ENCODE measurements at regions of chr16 and their contacts with region 1.

Region 1: GRCh38 chr16:30429678-30430427 is at the start of gene DCTPP1:
- DNase-seq: peak; percentile 89 to 100 (median 95)
- ATAC-seq: peak; percentile 96
- H3K4me3 ChIP-seq: peak within 1 kb of the TSS; percentile 62 to 71
- H3K4me3 Mint-ChIP-seq: no peak within 1 kb of the TSS
- H3K27ac ChIP-seq: peak within 1 kb of the TSS; percentile 60 to 72
- H3K27ac Mint-ChIP-seq: no peak within 1 kb of the TSS
- H3K4me1 ChIP-seq: peaks cover 18% of the 10 kb centered on the region
- H3K4me1 Mint-ChIP-seq: peaks cover 19% of the 10 kb centered on the region
- H3K27me3 ChIP-seq: no peaks in the 10 kb centered on the region
- H3K27me3 Mint-ChIP-seq: no peaks in the 10 kb centered on the region
- CTCF ChIP-seq: peak; percentile 63
- total RNA-seq, gene DCTPP1: 4.0 to 5.5 TPM

Region 2: GRCh38 chr16:30354423-30355143 is 75.3 kb before region 1 on chr16:
- CTCF ChIA-PET with region 1: no interaction called
- POLR2A ChIA-PET with region 1: no interaction called
- intact Hi-C with region 1: no loop called
- DNase-seq: no peak
- ATAC-seq: peak; percentile 34
- H3K4me3 ChIP-seq: peak overlapping the region; percentile 70 to 98
- H3K4me3 Mint-ChIP-seq: peak overlapping the region; percentile 94
- H3K27ac ChIP-seq: peak overlapping the region; percentile 63 to 98
- H3K27ac Mint-ChIP-seq: peak overlapping the region; percentile 98
- H3K4me1 ChIP-seq: peaks cover 32% of the 10 kb centered on the region
- H3K4me1 Mint-ChIP-seq: peaks cover 29% of the 10 kb centered on the region
- H3K27me3 ChIP-seq: no peaks in the 10 kb centered on the region
- H3K27me3 Mint-ChIP-seq: no peaks in the 10 kb centered on the region
- CTCF ChIP-seq: no peak

Region 3: GRCh38 chr16:30370444-30371247 is 59.2 kb before region 1 on chr16 and contains the start of gene TBC1D10B:
- CTCF ChIA-PET with region 1: no interaction called
- POLR2A ChIA-PET with region 1: interaction called, 3 read pairs
- intact Hi-C with region 1: loop called (anchors 1 kb)
- DNase-seq: peak; percentile 98 to 100 (median 99)
- ATAC-seq: peak; percentile 84
- H3K4me3 ChIP-seq: peak within 1 kb of the TSS; percentile 79 to 83
- H3K4me3 Mint-ChIP-seq: peak within 1 kb of the TSS; percentile 89
- H3K27ac ChIP-seq: peak within 1 kb of the TSS; percentile 36 to 84
- H3K27ac Mint-ChIP-seq: peak within 1 kb of the TSS; percentile 87
- H3K4me1 ChIP-seq: peaks cover 42% of the 10 kb centered on the region
- H3K4me1 Mint-ChIP-seq: peaks cover 54% of the 10 kb centered on the region
- H3K27me3 ChIP-seq: no peaks in the 10 kb centered on the region
- H3K27me3 Mint-ChIP-seq: no peaks in the 10 kb centered on the region
- CTCF ChIP-seq: no peak
- total RNA-seq, gene TBC1D10B: 12.3 to 13.8 TPM

Region 4: DNA sequence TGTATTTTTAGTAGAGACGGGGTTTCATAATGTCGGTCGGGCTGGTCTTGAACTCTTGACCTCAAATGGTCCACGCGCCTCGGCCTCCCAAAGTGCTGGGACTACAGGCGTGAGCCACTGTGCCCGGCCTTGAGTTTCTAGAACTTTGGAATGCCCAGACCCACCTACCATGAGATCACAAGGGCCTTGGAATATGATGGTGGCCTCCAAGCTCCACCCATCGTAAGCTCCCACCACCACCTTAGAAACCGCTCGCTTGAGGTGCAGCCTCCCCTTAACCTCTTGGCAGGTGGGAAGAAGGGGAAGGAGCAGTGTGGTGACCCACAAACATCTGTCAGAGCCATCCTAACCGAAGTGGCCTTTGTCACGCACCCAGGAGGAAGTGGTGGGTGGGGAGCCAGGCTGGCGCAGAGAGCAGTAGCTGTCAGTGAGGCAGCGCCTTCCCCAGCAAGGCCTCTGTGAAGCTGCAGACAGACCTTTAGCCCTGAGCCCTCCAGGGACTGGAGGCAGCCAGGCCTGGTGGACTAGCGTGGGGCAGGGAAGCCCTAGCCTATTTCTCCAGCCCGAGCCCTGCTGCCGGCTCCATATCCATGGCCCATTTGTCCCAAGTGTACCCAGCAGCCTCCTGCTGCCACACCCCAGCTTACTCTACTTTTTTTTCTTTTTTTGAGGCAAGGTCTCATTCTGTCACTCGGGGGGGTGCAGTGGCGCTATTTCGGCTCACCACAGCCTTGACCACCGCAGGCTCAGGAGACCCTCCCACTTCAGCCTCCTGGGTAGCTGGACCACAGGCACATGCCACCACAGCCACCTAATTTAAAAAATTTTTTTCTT is 28.9 kb after region 1 on chr16:
- CTCF ChIA-PET with region 1: interaction called, 12 read pairs
- POLR2A ChIA-PET with region 1: interaction called, 4 read pairs
- intact Hi-C with region 1: loop called in 1 of 2 experiments (anchors 1 kb)
- DNase-seq: peak; percentile 40 to 93 (median 76)
- ATAC-seq: peak; percentile 93
- H3K4me3 ChIP-seq: peak overlapping the region; percentile 5 to 22
- H3K4me3 Mint-ChIP-seq: peak overlapping the region; percentile 66
- H3K27ac ChIP-seq: peak overlapping the region; percentile 15 to 69
- H3K27ac Mint-ChIP-seq: peak overlapping the region; percentile 89
- H3K4me1 ChIP-seq: peaks cover 26% of the 10 kb centered on the region
- H3K4me1 Mint-ChIP-seq: peaks cover 48% of the 10 kb centered on the region
- H3K27me3 ChIP-seq: no peaks in the 10 kb centered on the region
- H3K27me3 Mint-ChIP-seq: no peaks in the 10 kb centered on the region
- CTCF ChIP-seq: no peak

Region 5: DNA sequence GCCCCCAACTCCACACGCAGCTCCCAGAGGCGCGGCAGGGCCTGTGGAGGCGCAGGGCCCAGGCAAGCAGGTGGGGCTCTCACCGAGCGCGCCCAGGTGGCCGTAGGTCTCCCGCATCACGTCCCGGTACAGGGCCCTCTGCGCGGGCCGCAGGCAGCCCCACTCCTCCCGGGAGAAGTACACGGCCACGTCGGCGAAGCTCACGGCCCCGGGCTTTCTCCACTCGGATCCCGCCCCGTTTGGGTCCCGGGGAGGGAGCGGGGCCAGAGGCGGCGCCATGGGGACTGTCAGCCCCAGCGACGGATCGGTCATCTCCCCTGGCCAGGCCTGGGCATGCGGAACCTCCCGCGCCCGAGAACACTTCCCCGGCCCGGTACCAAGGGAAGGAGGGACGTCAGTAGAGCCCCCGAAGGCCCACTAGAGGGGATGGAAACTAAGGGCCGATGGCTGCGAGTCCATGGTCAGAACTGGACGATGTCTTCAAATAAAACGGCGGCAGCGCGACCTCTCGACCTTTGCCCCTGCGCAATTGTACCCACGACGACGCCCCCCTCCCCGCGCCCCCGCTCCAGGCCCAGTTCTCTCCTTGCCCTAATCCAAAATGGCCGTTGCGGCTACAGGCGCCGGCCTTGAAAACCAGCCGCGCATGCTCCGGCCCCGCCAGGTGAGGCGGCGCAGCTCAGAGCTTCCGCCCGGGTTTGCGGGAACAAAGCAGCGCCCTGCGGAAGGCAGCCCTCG is 104.7 kb after region 1 on chr16 and contains the start of gene ZNF747:
- CTCF ChIA-PET with region 1: interaction called, 18 read pairs
- POLR2A ChIA-PET with region 1: interaction called, 7 read pairs
- intact Hi-C with region 1: loop called (anchors 1 kb)
- DNase-seq: peak; percentile 77 to 95 (median 92)
- ATAC-seq: peak; percentile 80
- H3K4me3 ChIP-seq: peak within 1 kb of the TSS; percentile 82 to 96
- H3K4me3 Mint-ChIP-seq: peak within 1 kb of the TSS; percentile 89
- H3K27ac ChIP-seq: peak within 1 kb of the TSS; percentile 77 to 97
- H3K27ac Mint-ChIP-seq: peak within 1 kb of the TSS; percentile 96
- H3K4me1 ChIP-seq: peaks cover 13% of the 10 kb centered on the region
- H3K4me1 Mint-ChIP-seq: peaks cover 38% of the 10 kb centered on the region
- H3K27me3 ChIP-seq: no peaks in the 10 kb centered on the region
- H3K27me3 Mint-ChIP-seq: no peaks in the 10 kb centered on the region
- CTCF ChIP-seq: no peak
- total RNA-seq, gene ZNF747: 6.2 to 6.3 TPM

Region 6: DNA sequence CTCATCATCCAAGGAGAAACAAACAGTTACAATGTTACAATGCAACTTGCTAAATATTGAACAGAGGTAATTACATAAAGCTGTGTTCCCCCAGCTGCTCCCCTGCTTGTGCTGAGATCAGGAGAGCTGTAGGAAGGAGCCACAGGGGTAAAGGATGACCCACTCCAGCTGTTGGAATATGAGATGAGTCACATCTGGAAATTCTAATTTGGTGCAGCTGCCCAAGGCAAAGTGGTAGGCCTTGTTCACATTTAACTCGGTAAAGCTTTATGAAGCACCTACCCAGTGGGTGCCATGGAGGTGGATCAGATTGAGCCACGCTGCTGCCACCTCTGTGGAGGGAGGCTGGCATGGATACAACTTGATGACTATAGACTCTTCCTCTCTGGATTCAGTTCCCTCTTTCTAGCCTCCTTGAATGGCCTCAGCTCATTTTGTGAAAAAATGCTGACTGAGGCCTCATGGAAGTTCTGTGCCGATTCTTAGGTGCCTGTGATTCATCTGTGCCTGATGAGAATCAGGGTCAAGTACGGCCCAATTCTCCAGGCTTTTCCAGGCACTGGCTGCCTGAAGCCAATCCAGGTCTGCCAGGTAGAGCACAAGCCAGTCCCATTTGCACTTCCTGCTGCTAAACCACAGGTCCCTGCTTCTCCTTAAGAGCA is 172.9 kb after region 1 on chr16:
- CTCF ChIA-PET with region 1: interaction called, 15 read pairs
- POLR2A ChIA-PET with region 1: no interaction called
- intact Hi-C with region 1: loop called (anchors 1 to 2 kb)
- DNase-seq: no peak
- ATAC-seq: no peak
- H3K4me3 ChIP-seq: no peak overlapping the region
- H3K4me3 Mint-ChIP-seq: no peak overlapping the region
- H3K27ac ChIP-seq: no peak overlapping the region
- H3K27ac Mint-ChIP-seq: peak overlapping the region; percentile 52
- H3K4me1 ChIP-seq: no peaks in the 10 kb centered on the region
- H3K4me1 Mint-ChIP-seq: peaks cover 4% of the 10 kb centered on the region
- H3K27me3 ChIP-seq: no peaks in the 10 kb centered on the region
- H3K27me3 Mint-ChIP-seq: no peaks in the 10 kb centered on the region
- CTCF ChIP-seq: no peak

Region 7: DNA sequence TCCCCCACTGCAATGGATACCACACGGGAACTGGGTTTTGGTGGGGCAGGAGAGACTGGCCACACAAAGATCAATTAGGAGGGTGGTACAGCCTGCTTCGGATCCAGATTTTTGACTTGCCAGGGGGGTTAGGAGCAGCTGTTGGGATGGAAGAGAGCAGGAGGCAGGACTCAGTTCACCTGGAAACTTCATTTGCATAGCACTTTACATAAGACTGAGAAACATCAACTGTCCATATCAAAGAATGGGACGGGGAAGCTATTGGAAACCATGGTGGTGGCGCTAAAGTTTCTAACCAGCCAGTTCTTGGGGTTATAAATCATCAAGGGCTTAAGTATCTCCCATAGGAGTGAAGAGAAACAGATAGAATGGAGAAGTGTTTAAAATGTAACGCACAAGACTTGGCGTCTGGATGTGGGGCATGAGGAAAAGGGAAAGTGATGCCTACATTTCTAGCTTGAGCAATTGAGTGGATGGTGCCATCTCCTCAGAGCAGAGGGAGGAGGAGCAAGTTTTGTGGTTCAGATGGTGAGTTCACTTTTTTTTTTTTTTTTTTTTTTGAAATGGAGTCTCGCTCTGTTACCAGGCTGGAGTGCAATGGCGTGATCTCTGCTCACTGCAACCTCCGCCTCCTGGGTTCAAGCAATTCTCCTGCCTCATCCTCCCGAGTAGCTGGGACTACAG is 262.7 kb after region 1 on chr16:
- CTCF ChIA-PET with region 1: no interaction called
- POLR2A ChIA-PET with region 1: no interaction called
- intact Hi-C with region 1: loop called in 1 of 2 experiments (anchors 1 kb)
- DNase-seq: no peak
- ATAC-seq: no peak
- H3K4me3 ChIP-seq: no peak overlapping the region
- H3K4me3 Mint-ChIP-seq: no peak overlapping the region
- H3K27ac ChIP-seq: no peak overlapping the region
- H3K27ac Mint-ChIP-seq: no peak overlapping the region
- H3K4me1 ChIP-seq: peaks cover 7% of the 10 kb centered on the region
- H3K4me1 Mint-ChIP-seq: peaks cover 15% of the 10 kb centered on the region
- H3K27me3 ChIP-seq: no peaks in the 10 kb centered on the region
- H3K27me3 Mint-ChIP-seq: no peaks in the 10 kb centered on the region
- CTCF ChIP-seq: no peak

Measured in CD8-positive, alpha-beta T cell (primary cell).